ENCODE measurements at regions of chrX and their contacts with region 1.

Region 1: DNA sequence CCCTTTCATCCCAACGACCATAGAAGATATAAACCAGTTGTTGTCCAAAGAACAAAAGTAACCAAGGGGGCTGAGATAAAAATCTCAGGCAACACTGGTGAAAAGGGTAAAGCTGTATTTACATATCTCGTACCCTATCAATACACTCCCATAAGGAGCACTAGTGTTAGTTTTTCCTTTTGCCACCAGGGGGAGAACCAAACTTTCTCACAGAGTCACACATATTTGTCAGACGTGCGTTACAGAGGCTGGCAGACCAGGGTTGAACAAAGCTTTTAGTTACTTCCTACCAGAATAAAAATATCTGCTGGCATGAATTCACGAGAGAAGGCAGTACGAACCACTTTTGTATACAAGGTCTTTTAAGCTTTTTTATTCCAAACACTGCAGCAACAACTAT is 88.3 kb downstream of the AMELX start:
- DNase-seq: peak in 1 of 2 donors; percentile 40
- ATAC-seq: peak in 6 of 8 donors; percentile 52 to 87 (median 82)
- H3K4me3 ChIP-seq: no peak overlapping the region
- H3K27ac ChIP-seq: no peak overlapping the region
- H3K4me1 ChIP-seq: peaks cover 0 to 6% (median 0%) of the 10 kb centered on the region in 9 donors
- H3K27me3 ChIP-seq: peaks cover 0 to 5% (median 0%) of the 10 kb centered on the region in 7 donors
- CTCF ChIP-seq: peak in 8 of 9 donors; percentile 16 to 65 (median 54)

Region 2: DNA sequence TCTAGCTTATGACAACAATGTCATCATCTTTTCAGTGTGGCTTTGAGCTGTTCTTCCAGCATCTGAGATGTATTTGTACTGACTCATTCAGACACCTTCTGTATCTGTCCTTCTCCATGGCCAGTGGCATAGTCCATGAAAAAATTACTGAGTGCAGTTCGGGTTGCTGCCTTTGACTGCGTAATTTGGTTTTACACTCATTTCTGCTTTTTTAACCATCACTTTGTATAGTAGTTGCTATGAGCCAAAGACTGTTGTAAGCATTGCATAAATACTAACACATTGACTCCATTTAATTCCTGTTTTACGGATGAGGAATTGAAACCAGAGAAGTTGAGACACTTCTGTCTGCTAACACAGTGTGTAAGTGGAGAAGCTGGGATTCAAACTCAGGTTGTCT is 570.4 kb before region 1 on chrX:
- intact Hi-C with region 1: no loop called
- DNase-seq: no peak
- ATAC-seq: no peak
- H3K4me3 ChIP-seq: no peak overlapping the region
- H3K27ac ChIP-seq: no peak overlapping the region
- H3K4me1 ChIP-seq: no peaks in the 10 kb centered on the region
- H3K27me3 ChIP-seq: no peaks in the 10 kb centered on the region
- CTCF ChIP-seq: no peak

Region 3: GRCh38 chrX:11319806-11320520 is 61.5 kb before region 1 on chrX:
- intact Hi-C with region 1: loop called in 1 of 10 experiments (anchors 5 kb)
- DNase-seq: no peak
- ATAC-seq: no peak
- H3K4me3 ChIP-seq: no peak overlapping the region
- H3K27ac ChIP-seq: no peak overlapping the region
- H3K4me1 ChIP-seq: no peaks in the 10 kb centered on the region
- H3K27me3 ChIP-seq: no peaks in the 10 kb centered on the region
- CTCF ChIP-seq: no peak

Region 4: GRCh38 chrX:11412715-11413623 is 31.5 kb after region 1 on chrX:
- intact Hi-C with region 1: no loop called
- DNase-seq: no peak
- ATAC-seq: no peak
- H3K4me3 ChIP-seq: no peak overlapping the region
- H3K27ac ChIP-seq: no peak overlapping the region
- H3K4me1 ChIP-seq: peaks cover 0 to 5% (median 0%) of the 10 kb centered on the region in 9 donors
- H3K27me3 ChIP-seq: no peaks in the 10 kb centered on the region
- CTCF ChIP-seq: no peak

Region 5: GRCh38 chrX:11499076-11500044 is 117.9 kb after region 1 on chrX:
- intact Hi-C with region 1: loop called in 1 of 10 experiments (anchors 10 kb)
- DNase-seq: no peak
- ATAC-seq: no peak
- H3K4me3 ChIP-seq: no peak overlapping the region
- H3K27ac ChIP-seq: no peak overlapping the region
- H3K4me1 ChIP-seq: no peaks in the 10 kb centered on the region
- H3K27me3 ChIP-seq: no peaks in the 10 kb centered on the region
- CTCF ChIP-seq: no peak